GM12878 (cell line): ENCODE measurements at regions of chr12 and their contacts with region 1.

Region 1: GRCh38 chr12:106774808-106775765 is 605 bp downstream of the RIC8B start:
- DNase-seq: no peak
- ATAC-seq: peak; percentile 37
- H3K4me3 ChIP-seq: peak overlapping the region; percentile 73
- H3K27ac ChIP-seq: peak overlapping the region; percentile 71
- H3K4me1 ChIP-seq: no peaks in the 10 kb centered on the region
- H3K27me3 ChIP-seq: no peaks in the 10 kb centered on the region
- CTCF ChIP-seq: no peak
- EP300 ChIP-seq: no peak
- POLR2A ChIP-seq: no peak
- RAD21 ChIP-seq: no peak

Region 2: DNA sequence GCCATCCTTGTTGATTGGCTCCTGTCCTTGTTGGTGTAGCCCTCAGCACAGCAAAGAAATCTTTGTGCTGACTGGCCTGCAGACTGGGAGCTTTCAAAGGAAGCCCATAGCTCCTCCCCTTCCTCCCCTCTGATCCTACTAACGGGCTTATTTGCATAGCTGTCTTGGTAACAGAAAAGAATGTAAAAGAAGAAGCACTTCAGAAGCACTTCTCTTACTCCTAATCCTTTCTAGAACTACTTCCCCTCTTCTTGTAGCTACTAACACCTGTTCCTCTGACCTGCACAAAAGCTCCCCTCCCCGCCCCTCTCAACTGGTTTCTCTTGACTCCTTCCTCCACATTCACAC is 14.9 kb before region 1 on chr12:
- CTCF ChIA-PET with region 1: interaction called, 6 read pairs
- POLR2A ChIA-PET with region 1: interaction called, 8 read pairs
- RAD21 ChIA-PET with region 1: interaction called, 4 read pairs
- SMC1A ChIA-PET with region 1: interaction called, 10 read pairs
- in situ Hi-C with region 1: no loop called
- intact Hi-C with region 1: no loop called
- DNase-seq: peak; percentile 65
- ATAC-seq: peak; percentile 98
- H3K4me3 ChIP-seq: peak overlapping the region; percentile 57
- H3K27ac ChIP-seq: peak overlapping the region; percentile 97
- H3K4me1 ChIP-seq: peaks cover 37% of the 10 kb centered on the region
- H3K27me3 ChIP-seq: no peaks in the 10 kb centered on the region
- CTCF ChIP-seq: no peak
- EP300 ChIP-seq: no peak
- POLR2A ChIP-seq: peak; percentile 81
- RAD21 ChIP-seq: no peak